Endothelial cell of umbilical vein (primary cell): ENCODE measurements at regions of chr3 and their contacts with region 1.

Region 1: GRCh38 chr3:64187065-64187959 is 38.0 kb downstream of the PRICKLE2 start:
- DNase-seq: peak; percentile 100
- H3K4me3 ChIP-seq: peak overlapping the region in 1 of 3 experiments; percentile 4
- H3K27ac ChIP-seq: peak overlapping the region; percentile 84
- H3K4me1 ChIP-seq: peaks cover 40% of the 10 kb centered on the region
- H3K27me3 ChIP-seq: no peaks in the 10 kb centered on the region
- CTCF ChIP-seq: peak in 1 of 2 donors; percentile 15
- POLR2A ChIP-seq: no peak

Region 2: DNA sequence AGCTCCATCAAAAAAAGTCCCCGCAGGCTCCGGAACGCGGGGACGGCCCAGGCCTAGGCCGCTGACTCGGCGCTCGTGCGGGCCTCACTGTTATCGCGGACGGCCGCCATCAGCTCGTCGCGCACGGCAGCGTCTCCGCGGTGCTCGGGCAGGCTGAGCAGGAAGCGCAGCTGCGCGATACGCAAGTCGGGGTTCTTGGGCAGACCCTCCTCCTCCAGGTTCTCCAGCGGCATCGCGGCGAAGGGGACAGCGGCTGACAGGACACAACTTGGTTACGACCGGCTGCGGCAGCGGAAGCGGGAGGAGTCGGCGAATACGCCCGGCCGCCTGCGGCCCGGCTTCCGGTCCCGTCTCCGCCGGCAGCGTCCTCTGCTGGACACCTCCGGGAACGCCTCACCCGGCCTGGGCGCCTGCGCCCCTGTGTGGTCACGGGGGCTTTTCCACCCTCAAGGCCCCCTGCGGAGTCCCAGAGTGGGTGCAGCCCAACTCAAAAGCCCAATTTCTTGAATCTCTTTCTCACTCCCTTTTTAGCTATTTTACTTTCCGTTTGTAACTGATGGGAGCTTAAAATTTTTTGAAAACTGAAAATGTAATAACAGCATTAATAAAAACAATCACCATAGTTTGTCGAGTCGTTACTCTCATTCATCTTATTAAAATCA is 164.0 kb before region 1 on chr3 and contains the start of gene PSMD6:
- CTCF ChIA-PET with region 1: no interaction called
- POLR2A ChIA-PET with region 1: no interaction called
- dilution Hi-C with region 1: no loop called
- intact Hi-C with region 1: loop called (anchors 1 kb)
- DNase-seq: peak; percentile 91
- H3K4me3 ChIP-seq: peak within 1 kb of the TSS; percentile 40 to 83 (median 72)
- H3K27ac ChIP-seq: peak within 1 kb of the TSS; percentile 61
- H3K4me1 ChIP-seq: peaks cover 11% of the 10 kb centered on the region
- H3K27me3 ChIP-seq: peaks cover 9 to 19% of the 10 kb centered on the region in 2 experiments
- CTCF ChIP-seq: peak; percentile 98 to 100
- POLR2A ChIP-seq: peak; percentile 83
- total RNA-seq, gene PSMD6: 89.4 and 90.8 TPM in 2 replicates

Region 3: GRCh38 chr3:64150623-64151207 is 36.6 kb before region 1 on chr3:
- CTCF ChIA-PET with region 1: no interaction called
- POLR2A ChIA-PET with region 1: no interaction called
- dilution Hi-C with region 1: no loop called
- intact Hi-C with region 1: loop called (anchors 1 kb)
- DNase-seq: peak; percentile 80
- H3K4me3 ChIP-seq: no peak overlapping the region
- H3K27ac ChIP-seq: no peak overlapping the region
- H3K4me1 ChIP-seq: no peaks in the 10 kb centered on the region
- H3K27me3 ChIP-seq: no peaks in the 10 kb centered on the region
- CTCF ChIP-seq: no peak
- POLR2A ChIP-seq: no peak

Region 4: GRCh38 chr3:64267721-64268604 is 80.7 kb after region 1 on chr3:
- CTCF ChIA-PET with region 1: interaction called, 8 read pairs
- POLR2A ChIA-PET with region 1: no interaction called
- dilution Hi-C with region 1: no loop called
- intact Hi-C with region 1: loop called (anchors 2 kb)
- DNase-seq: peak; percentile 11
- H3K4me3 ChIP-seq: peak overlapping the region; percentile 14 to 39 (median 35)
- H3K27ac ChIP-seq: no peak overlapping the region
- H3K4me1 ChIP-seq: peaks cover 17% of the 10 kb centered on the region
- H3K27me3 ChIP-seq: peaks cover 7 to 8% of the 10 kb centered on the region in 2 experiments
- CTCF ChIP-seq: no peak
- POLR2A ChIP-seq: no peak

Region 5: GRCh38 chr3:64399205-64399800 is 212.0 kb after region 1 on chr3:
- CTCF ChIA-PET with region 1: no interaction called
- POLR2A ChIA-PET with region 1: no interaction called
- dilution Hi-C with region 1: no loop called
- intact Hi-C with region 1: loop called (anchors 5 kb)
- DNase-seq: peak; percentile 77
- H3K4me3 ChIP-seq: no peak overlapping the region
- H3K27ac ChIP-seq: no peak overlapping the region
- H3K4me1 ChIP-seq: no peaks in the 10 kb centered on the region
- H3K27me3 ChIP-seq: peaks cover 0 to 6% of the 10 kb centered on the region in 2 experiments
- CTCF ChIP-seq: peak; percentile 61 to 63
- POLR2A ChIP-seq: no peak